Activated CD4-positive, alpha-beta memory T cell treated with anti-CD3 and anti-CD28 coated beads, Interleukin-2, amount 10 ng/mL, durations not matched to agents 7 days and 5 days (primary cell): ENCODE measurements at regions of chr4 and their contacts with region 1.

Region 1: DNA sequence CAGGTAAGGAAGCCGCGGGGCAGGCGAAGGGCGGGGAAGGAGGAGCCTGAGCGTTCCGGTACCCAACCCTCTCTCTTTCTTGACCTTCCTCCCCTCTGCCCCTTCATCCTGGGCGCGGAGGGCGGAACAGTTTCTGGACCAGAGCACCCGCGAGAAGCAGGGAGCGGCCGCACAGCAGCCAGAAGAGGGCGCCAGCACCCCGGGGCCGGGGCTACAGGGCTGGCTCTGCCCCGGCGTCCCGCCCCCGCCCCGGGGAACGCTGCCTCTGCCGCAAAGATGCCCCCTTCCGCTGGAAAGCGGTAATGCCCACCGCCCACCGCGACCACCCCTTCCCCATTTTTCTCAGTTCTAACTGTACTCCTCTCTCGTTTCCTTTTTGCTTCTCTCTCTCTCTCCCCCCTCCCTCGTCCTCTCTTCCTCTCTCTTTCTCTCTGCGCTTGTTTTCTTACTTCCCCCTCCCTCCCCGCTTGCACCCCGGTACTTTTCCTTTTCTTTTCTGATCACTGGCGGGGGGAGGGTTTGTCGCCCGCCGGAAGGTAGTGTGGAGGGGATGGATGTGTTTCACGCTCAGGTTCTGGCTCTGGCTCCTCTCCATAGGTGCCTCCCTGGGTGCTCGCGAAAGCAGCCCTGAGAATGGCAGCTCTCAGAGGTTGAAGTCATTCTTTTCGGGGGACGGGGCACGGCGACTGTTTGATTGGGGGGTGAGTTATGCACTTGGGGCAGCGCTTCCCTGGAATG is 13.1 kb upstream of the PRDM8 start:
- DNase-seq: peak; percentile 95
- H3K4me3 Mint-ChIP-seq: peak overlapping the region; percentile 99
- H3K27ac Mint-ChIP-seq: peak overlapping the region; percentile 97
- H3K4me1 Mint-ChIP-seq: peaks cover 53% of the 10 kb centered on the region
- H3K27me3 Mint-ChIP-seq: peaks cover 6% of the 10 kb centered on the region

Region 2: GRCh38 chr4:80072744-80073472 is 111.3 kb before region 1 on chr4 and contains the start of gene ANTXR2:
- CTCF ChIA-PET with region 1: interaction called, 28 read pairs
- POLR2A ChIA-PET with region 1: interaction called, 71 read pairs
- DNase-seq: peak; percentile 83
- H3K4me3 Mint-ChIP-seq: peak within 1 kb of the TSS; percentile 87
- H3K27ac Mint-ChIP-seq: peak within 1 kb of the TSS; percentile 92
- H3K4me1 Mint-ChIP-seq: peaks cover 73% of the 10 kb centered on the region
- H3K27me3 Mint-ChIP-seq: no peaks in the 10 kb centered on the region
- total RNA-seq, gene ANTXR2: 113 to 114 TPM

Region 3: GRCh38 chr4:80153874-80154544 is 30.2 kb before region 1 on chr4:
- CTCF ChIA-PET with region 1: interaction called, 10 read pairs
- POLR2A ChIA-PET with region 1: no interaction called
- DNase-seq: no peak
- H3K4me3 Mint-ChIP-seq: no peak overlapping the region
- H3K27ac Mint-ChIP-seq: peak overlapping the region; percentile 9
- H3K4me1 Mint-ChIP-seq: peaks cover 10% of the 10 kb centered on the region
- H3K27me3 Mint-ChIP-seq: peaks cover 2% of the 10 kb centered on the region

Region 4: DNA sequence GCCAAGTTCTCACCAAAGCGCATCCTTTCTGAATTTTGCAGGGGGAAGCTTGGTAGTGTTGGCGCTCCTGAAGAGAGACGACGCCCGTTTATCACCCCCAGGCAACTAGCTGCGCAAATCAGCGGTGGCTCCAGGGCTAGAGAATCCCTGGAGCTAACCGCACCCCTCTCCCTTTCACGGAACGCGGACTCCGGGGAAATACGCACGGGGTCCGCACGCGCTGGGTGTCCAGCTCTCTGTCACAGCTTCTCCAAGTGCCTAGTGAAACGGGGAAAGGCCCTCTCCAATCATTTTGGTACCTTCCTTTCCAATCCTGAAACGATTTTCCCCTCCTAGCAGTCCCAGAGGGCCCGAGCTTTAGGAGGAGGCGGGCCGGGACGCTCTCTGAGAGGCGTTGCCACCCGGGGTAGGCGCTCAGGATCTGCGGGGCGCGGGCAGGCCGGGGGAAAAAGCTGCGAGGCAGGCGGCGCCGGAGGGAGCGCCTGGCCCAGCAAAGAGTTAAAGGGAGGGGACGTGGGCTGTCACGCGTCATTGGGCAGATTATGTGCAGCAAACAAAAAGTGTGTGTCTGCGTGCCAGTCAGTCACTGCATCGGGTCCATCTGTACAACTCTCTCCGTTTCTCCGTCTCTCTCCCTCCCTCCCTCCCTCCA is 12.8 kb after region 1 on chr4 and contains the start of gene PRDM8:
- CTCF ChIA-PET with region 1: interaction called, 135 read pairs
- POLR2A ChIA-PET with region 1: interaction called, 70 read pairs
- DNase-seq: no peak
- H3K4me3 Mint-ChIP-seq: peak within 1 kb of the TSS; percentile 57
- H3K27ac Mint-ChIP-seq: no peak within 1 kb of the TSS
- H3K4me1 Mint-ChIP-seq: peaks cover 28% of the 10 kb centered on the region
- H3K27me3 Mint-ChIP-seq: peaks cover 14% of the 10 kb centered on the region
- total RNA-seq, gene PRDM8: 18.9 to 21.9 TPM